ENCODE measurements at regions of chr15 and their contacts with region 1.

Region 1: GRCh38 chr15:33292717-33293307 is 18.0 kb upstream of the RYR3 start:
- DNase-seq: peak in 2 of 3 donors; percentile 58 to 81
- ATAC-seq: peak; percentile 78 to 84
- H3K4me3 ChIP-seq: no peak overlapping the region
- H3K27ac ChIP-seq: no peak overlapping the region
- H3K4me1 ChIP-seq: no peaks in the 10 kb centered on the region
- H3K27me3 ChIP-seq: no peaks in the 10 kb centered on the region

Region 2: GRCh38 chr15:33430577-33430976 is 137.8 kb after region 1 on chr15:
- intact Hi-C with region 1: no loop called
- DNase-seq: no peak
- ATAC-seq: no peak
- H3K4me3 ChIP-seq: no peak overlapping the region
- H3K27ac ChIP-seq: no peak overlapping the region
- H3K4me1 ChIP-seq: no peaks in the 10 kb centered on the region
- H3K27me3 ChIP-seq: peaks cover 4% of the 10 kb centered on the region

Region 3: DNA sequence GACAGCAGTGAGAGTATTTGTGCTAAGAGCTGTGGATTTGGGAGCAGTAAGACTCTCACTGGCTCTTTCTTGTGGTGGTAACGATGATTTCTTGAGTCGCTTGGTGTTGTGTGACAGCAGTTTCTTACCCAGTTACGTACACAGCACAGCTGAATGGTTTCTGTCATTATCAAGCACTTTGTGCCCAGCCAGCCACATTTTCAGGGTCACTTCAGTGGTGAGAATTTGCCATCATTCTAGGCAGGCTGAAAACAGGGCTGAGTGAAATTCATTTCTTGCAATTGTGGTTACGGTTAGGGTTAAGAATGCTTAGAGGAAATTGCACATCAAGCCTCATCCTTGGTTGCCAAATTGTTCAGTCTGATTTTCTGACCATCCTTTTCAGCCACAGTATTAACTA is 148.1 kb after region 1 on chr15:
- intact Hi-C with region 1: no loop called
- DNase-seq: no peak
- ATAC-seq: no peak
- H3K4me3 ChIP-seq: no peak overlapping the region
- H3K27ac ChIP-seq: no peak overlapping the region
- H3K4me1 ChIP-seq: no peaks in the 10 kb centered on the region
- H3K27me3 ChIP-seq: no peaks in the 10 kb centered on the region

Region 4: GRCh38 chr15:33700695-33701304 is 408.0 kb after region 1 on chr15:
- intact Hi-C with region 1: loop called (anchors 2 to 10 kb)
- DNase-seq: peak; percentile 58 to 87 (median 80)
- ATAC-seq: peak; percentile 83 to 92
- H3K4me3 ChIP-seq: no peak overlapping the region
- H3K27ac ChIP-seq: no peak overlapping the region
- H3K4me1 ChIP-seq: no peaks in the 10 kb centered on the region
- H3K27me3 ChIP-seq: no peaks in the 10 kb centered on the region

Measured in right cardiac atrium (tissue), 5 donors.